ENCODE measurements at regions of chr2 and their contacts with region 1.

Region 1: GRCh38 chr2:84919885-84920580 is 14.6 kb downstream of the TMSB10 start:
- DNase-seq: peak; percentile 29
- H3K4me3 Mint-ChIP-seq: peak overlapping the region; percentile 13
- H3K27ac Mint-ChIP-seq: peak overlapping the region; percentile 79
- H3K4me1 Mint-ChIP-seq: peaks cover 44% of the 10 kb centered on the region
- H3K27me3 Mint-ChIP-seq: no peaks in the 10 kb centered on the region

Region 2: DNA sequence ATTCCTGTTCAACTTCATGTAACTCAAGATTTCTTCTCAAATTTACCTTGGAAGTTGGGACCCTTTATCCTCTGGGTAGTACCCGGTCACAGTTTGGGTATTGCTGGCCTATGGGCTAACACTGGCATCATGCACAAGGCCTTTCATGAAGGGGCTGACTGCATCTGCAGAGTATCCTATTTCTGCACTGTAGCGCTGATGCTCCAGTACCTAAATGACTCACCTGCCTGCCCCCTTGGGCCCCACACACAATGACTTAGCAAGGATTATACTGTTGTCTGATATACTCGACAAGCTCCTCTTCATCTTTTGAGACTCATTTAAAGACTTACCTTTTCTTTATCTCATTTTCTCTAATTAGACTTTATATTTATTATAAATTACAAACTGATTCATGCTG is 363.8 kb before region 1 on chr2:
- CTCF ChIA-PET with region 1: no interaction called
- POLR2A ChIA-PET with region 1: no interaction called
- DNase-seq: no peak
- H3K4me3 Mint-ChIP-seq: no peak overlapping the region
- H3K27ac Mint-ChIP-seq: no peak overlapping the region
- H3K4me1 Mint-ChIP-seq: no peaks in the 10 kb centered on the region
- H3K27me3 Mint-ChIP-seq: no peaks in the 10 kb centered on the region

Region 3: GRCh38 chr2:84905181-84906107 is 14.6 kb before region 1 on chr2 and contains the start of gene TMSB10:
- CTCF ChIA-PET with region 1: interaction called, 71 read pairs
- POLR2A ChIA-PET with region 1: interaction called, 21 read pairs
- DNase-seq: peak; percentile 90
- H3K4me3 Mint-ChIP-seq: peak within 1 kb of the TSS; percentile 91
- H3K27ac Mint-ChIP-seq: peak within 1 kb of the TSS; percentile 96
- H3K4me1 Mint-ChIP-seq: peaks cover 71% of the 10 kb centered on the region
- H3K27me3 Mint-ChIP-seq: no peaks in the 10 kb centered on the region
- total RNA-seq, gene TMSB10: 5,491 to 5,845 TPM

Region 4: DNA sequence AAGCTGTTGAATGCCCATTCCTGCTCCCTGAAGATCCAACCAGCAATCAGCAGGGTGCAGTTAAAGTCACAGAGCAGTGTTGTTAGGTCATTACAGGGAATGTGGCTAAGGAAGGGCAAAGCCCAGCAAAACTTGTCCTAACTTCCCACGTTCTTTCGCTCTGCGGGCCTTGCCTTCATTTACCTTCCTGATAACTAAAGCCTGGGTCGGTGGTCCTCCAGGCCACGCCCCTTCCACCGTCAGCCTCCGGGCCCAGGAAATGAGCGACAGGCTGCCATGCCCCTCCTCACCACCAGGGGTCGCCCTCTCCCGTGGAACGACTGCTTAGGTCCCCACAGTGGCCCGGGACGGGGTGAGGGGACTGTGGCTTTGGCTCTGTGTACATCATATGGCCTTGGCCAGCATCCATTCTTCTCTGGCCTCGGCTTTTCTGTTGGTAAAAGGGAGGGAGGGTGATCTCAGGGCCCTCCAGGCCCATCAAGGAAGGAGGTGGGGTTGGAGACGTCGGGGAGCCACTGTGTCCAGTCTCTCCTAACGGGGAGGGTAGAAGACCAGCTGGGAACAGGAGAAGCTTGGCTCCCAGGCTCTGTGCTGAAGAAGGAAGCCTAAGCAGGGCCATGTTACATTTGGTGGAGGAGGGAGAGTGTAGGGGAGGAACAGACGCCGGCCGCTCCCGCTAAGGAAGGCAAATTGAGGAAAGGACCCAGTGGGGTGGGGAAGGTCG is 500.7 kb after region 1 on chr2:
- CTCF ChIA-PET with region 1: no interaction called
- POLR2A ChIA-PET with region 1: no interaction called
- DNase-seq: peak; percentile 90
- H3K4me3 Mint-ChIP-seq: peak overlapping the region; percentile 38
- H3K27ac Mint-ChIP-seq: peak overlapping the region; percentile 100
- H3K4me1 Mint-ChIP-seq: peaks cover 35% of the 10 kb centered on the region
- H3K27me3 Mint-ChIP-seq: no peaks in the 10 kb centered on the region

Measured in activated CD4-positive, alpha-beta T cell treated with anti-CD3 and anti-CD28 coated beads, Interleukin-2, amount 10 ng/mL, durations not matched to agents 7 days and 5 days (primary cell).